ENCODE measurements at regions of chr15 and their contacts with region 1.

Region 1: GRCh38 chr15:58987489-58988005 is at the start of gene RNF111:
- DNase-seq: peak; percentile 79 to 97 (median 86)
- ATAC-seq: peak; percentile 95
- H3K4me3 ChIP-seq: peak within 1 kb of the TSS; percentile 99
- H3K4me3 Mint-ChIP-seq: peak within 1 kb of the TSS; percentile 98
- H3K27ac ChIP-seq: peak within 1 kb of the TSS; percentile 84 to 87
- H3K27ac Mint-ChIP-seq: peak within 1 kb of the TSS; percentile 92
- H3K4me1 ChIP-seq: peaks cover 14% of the 10 kb centered on the region
- H3K4me1 Mint-ChIP-seq: peaks cover 51% of the 10 kb centered on the region
- H3K27me3 ChIP-seq: no peaks in the 10 kb centered on the region
- H3K27me3 Mint-ChIP-seq: no peaks in the 10 kb centered on the region
- CTCF ChIP-seq: no peak
- total RNA-seq, gene RNF111: 35.4 to 37.1 TPM

Region 2: GRCh38 chr15:59042041-59042440 is 54.5 kb after region 1 on chr15:
- CTCF ChIA-PET with region 1: no interaction called
- POLR2A ChIA-PET with region 1: no interaction called
- intact Hi-C with region 1: loop called in 1 of 2 experiments (anchors 10 kb)
- DNase-seq: no peak
- ATAC-seq: no peak
- H3K4me3 ChIP-seq: no peak overlapping the region
- H3K4me3 Mint-ChIP-seq: no peak overlapping the region
- H3K27ac ChIP-seq: no peak overlapping the region
- H3K27ac Mint-ChIP-seq: no peak overlapping the region
- H3K4me1 ChIP-seq: peaks cover 16% of the 10 kb centered on the region
- H3K4me1 Mint-ChIP-seq: peaks cover 46% of the 10 kb centered on the region
- H3K27me3 ChIP-seq: no peaks in the 10 kb centered on the region
- H3K27me3 Mint-ChIP-seq: no peaks in the 10 kb centered on the region
- CTCF ChIP-seq: no peak

Region 3: DNA sequence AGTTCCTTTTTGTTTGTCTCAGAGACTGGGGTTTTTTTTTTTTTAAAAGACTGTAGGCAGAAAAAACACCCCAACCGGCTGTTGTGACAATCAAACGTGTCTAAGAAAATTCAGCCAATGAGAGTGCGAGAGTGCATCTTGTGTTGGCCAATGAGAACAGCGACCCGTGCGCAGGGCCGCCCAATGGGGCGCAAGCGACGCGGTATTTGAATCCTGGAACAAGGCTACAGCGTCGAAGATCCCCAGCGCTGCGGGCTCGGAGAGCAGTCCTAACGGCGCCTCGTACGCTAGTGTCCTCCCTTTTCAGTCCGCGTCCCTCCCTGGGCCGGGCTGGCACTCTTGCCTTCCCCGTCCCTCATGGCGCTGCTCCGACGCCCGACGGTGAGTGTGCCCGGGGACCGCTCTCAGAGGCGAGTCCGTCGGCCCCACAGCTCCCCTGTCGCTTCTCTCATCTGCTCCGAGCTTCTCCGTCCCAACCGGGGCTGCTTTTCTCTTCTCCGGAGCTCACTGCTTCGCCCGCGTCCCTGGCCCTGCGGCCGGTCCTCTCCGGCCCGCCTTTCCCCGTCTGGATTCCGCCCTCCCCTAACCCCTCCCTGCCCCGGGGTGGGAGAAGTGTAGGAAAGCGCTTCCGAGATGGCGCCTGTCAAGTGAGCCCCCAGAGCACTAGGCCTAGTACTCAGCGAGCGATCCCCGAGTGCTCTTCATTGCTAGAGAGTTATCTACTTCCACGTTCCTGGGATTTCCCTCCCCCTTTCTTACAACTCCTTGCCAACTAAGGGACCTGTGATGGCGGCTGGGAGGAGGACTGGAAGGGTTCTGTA is 117.6 kb after region 1 on chr15 and contains the start of gene CCNB2:
- CTCF ChIA-PET with region 1: no interaction called
- POLR2A ChIA-PET with region 1: no interaction called
- intact Hi-C with region 1: loop called (anchors 2 to 10 kb)
- DNase-seq: peak; percentile 68 to 95 (median 79)
- ATAC-seq: peak; percentile 99
- H3K4me3 ChIP-seq: peak within 1 kb of the TSS; percentile 71
- H3K4me3 Mint-ChIP-seq: peak within 1 kb of the TSS; percentile 97
- H3K27ac ChIP-seq: peak within 1 kb of the TSS in 1 of 2 donors; percentile 26
- H3K27ac Mint-ChIP-seq: peak within 1 kb of the TSS; percentile 99
- H3K4me1 ChIP-seq: peaks cover 9% of the 10 kb centered on the region
- H3K4me1 Mint-ChIP-seq: peaks cover 17% of the 10 kb centered on the region
- H3K27me3 ChIP-seq: no peaks in the 10 kb centered on the region
- H3K27me3 Mint-ChIP-seq: no peaks in the 10 kb centered on the region
- CTCF ChIP-seq: no peak
- total RNA-seq, gene CCNB2: 0.85 TPM in 1 of 2 experiments, not detected in the other

Region 4: GRCh38 chr15:59138243-59138642 is 150.7 kb after region 1 on chr15:
- CTCF ChIA-PET with region 1: no interaction called
- POLR2A ChIA-PET with region 1: no interaction called
- intact Hi-C with region 1: loop called in 1 of 2 experiments (anchors 10 kb)
- DNase-seq: peak; percentile 30 to 79 (median 51)
- ATAC-seq: peak; percentile 92
- H3K4me3 ChIP-seq: no peak overlapping the region
- H3K4me3 Mint-ChIP-seq: no peak overlapping the region
- H3K27ac ChIP-seq: no peak overlapping the region
- H3K27ac Mint-ChIP-seq: no peak overlapping the region
- H3K4me1 ChIP-seq: peaks cover 6% of the 10 kb centered on the region
- H3K4me1 Mint-ChIP-seq: peaks cover 8% of the 10 kb centered on the region
- H3K27me3 ChIP-seq: no peaks in the 10 kb centered on the region
- H3K27me3 Mint-ChIP-seq: no peaks in the 10 kb centered on the region
- CTCF ChIP-seq: peak; percentile 58

Region 5: DNA sequence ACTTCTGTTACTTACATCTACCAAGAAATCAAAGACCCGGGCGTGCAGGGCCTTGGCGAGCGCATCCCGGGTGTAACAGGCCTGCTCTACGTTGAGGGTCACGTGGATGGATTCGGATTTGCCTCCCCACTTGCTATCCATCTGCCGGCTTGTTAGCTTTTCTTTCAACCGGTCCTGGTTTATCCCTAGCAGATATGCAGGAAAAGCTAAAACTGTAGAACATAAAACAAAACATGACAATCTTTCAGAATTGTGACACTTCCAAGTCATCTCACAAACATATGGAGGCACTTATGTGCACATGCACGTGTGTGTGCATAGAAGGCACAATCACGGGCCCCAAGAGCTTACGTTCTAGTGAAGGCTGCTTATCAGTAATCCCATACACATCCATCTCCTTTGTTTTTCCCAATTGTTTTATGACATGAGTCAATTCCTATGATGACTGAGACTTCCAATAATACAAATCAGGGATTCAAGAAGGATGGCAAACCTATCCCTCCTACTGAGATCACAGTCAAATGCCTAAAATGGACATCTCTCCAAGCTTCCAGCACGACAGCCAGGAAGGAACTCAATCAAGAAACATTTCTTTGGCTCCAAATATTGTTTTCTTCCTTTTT is 230.4 kb after region 1 on chr15:
- CTCF ChIA-PET with region 1: no interaction called
- POLR2A ChIA-PET with region 1: no interaction called
- intact Hi-C with region 1: no loop called
- DNase-seq: no peak
- ATAC-seq: no peak
- H3K4me3 ChIP-seq: no peak overlapping the region
- H3K4me3 Mint-ChIP-seq: no peak overlapping the region
- H3K27ac ChIP-seq: no peak overlapping the region
- H3K27ac Mint-ChIP-seq: no peak overlapping the region
- H3K4me1 ChIP-seq: no peaks in the 10 kb centered on the region
- H3K4me1 Mint-ChIP-seq: no peaks in the 10 kb centered on the region
- H3K27me3 ChIP-seq: no peaks in the 10 kb centered on the region
- H3K27me3 Mint-ChIP-seq: peaks cover 10% of the 10 kb centered on the region
- CTCF ChIP-seq: no peak

Region 6: DNA sequence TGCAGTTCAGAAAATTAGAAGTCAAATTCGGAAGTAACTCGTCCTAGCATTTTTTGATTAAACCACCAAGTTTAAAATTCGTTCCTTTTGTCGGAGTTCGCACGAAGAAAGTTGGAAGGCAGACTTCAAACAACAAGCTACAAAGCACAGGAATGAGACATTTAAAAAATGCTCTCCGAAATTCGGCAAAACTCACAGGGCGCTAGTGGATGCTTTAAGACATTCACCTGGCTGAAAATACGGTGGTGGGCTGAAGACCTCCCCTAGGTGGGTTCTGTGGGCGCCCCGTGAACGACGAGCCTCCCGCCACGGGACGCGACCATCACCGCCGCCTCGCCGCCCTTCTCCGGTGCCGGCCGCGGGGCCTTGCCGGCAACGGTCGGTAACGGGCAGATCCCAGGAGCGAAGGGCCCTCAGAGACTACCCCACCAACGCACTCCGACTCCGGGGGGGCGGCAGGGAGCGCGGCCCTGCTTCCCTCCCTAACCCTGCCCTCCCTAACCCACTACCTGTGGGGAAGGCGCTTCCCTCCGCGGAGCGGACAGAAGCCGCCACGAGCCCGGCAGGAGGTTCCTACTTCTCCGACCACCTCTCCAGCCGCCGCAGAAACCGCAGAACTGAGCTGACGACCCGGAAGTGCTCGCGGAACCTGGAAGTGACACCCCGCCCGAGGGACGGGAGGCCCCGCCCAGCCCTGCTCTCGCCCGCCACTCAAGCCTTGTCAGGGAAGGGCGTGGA is 669.5 kb after region 1 on chr15 and contains the start of gene GTF2A2:
- CTCF ChIA-PET with region 1: no interaction called
- POLR2A ChIA-PET with region 1: interaction called, 3 read pairs
- intact Hi-C with region 1: loop called in 1 of 2 experiments (anchors 5 kb)
- DNase-seq: peak; percentile 82 to 96 (median 89)
- ATAC-seq: peak; percentile 98
- H3K4me3 ChIP-seq: peak within 1 kb of the TSS; percentile 94
- H3K4me3 Mint-ChIP-seq: peak within 1 kb of the TSS; percentile 57
- H3K27ac ChIP-seq: peak within 1 kb of the TSS; percentile 77 to 86
- H3K27ac Mint-ChIP-seq: no peak within 1 kb of the TSS
- H3K4me1 ChIP-seq: peaks cover 17% of the 10 kb centered on the region
- H3K4me1 Mint-ChIP-seq: no peaks in the 10 kb centered on the region
- H3K27me3 ChIP-seq: no peaks in the 10 kb centered on the region
- H3K27me3 Mint-ChIP-seq: no peaks in the 10 kb centered on the region
- CTCF ChIP-seq: no peak
- total RNA-seq, gene GTF2A2: 40.3 to 44.6 TPM

Measured in CD4-positive, alpha-beta T cell (primary cell).